Activated T-helper 1 cell treated with anti-CD3 and anti-CD28 coated beads, Interleukin-12 subunit alpha, Interleukin-12 subunit beta, Interleukin-2, Interleukin-4 antibody, amounts not matched to agents 30 ng/mL and 10 ng/mL and 1 ng/mL, durations not matched to agents 14 hours and 24 hours and 36 hours (primary cell): ENCODE measurements at regions of chr9 and their contacts with region 1.

Region 1: GRCh38 chr9:14768405-14769229 is 46.1 kb upstream of the CER1 start:
- DNase-seq: no peak
- H3K4me3 Mint-ChIP-seq: no peak overlapping the region
- H3K27ac Mint-ChIP-seq: no peak overlapping the region
- H3K4me1 Mint-ChIP-seq: no peaks in the 10 kb centered on the region
- H3K27me3 Mint-ChIP-seq: peaks cover 10% of the 10 kb centered on the region

Region 2: GRCh38 chr9:13427587-13427986 is 1341.0 kb before region 1 on chr9:
- intact Hi-C with region 1: loop called (anchors 5 kb)
- DNase-seq: no peak
- H3K4me3 Mint-ChIP-seq: no peak overlapping the region
- H3K27ac Mint-ChIP-seq: no peak overlapping the region
- H3K4me1 Mint-ChIP-seq: no peaks in the 10 kb centered on the region
- H3K27me3 Mint-ChIP-seq: no peaks in the 10 kb centered on the region

Region 3: GRCh38 chr9:14353222-14354056 is 415.2 kb before region 1 on chr9:
- intact Hi-C with region 1: loop called (anchors 2 kb)
- DNase-seq: peak; percentile 57
- H3K4me3 Mint-ChIP-seq: no peak overlapping the region
- H3K27ac Mint-ChIP-seq: no peak overlapping the region
- H3K4me1 Mint-ChIP-seq: peaks cover 7% of the 10 kb centered on the region
- H3K27me3 Mint-ChIP-seq: peaks cover 31% of the 10 kb centered on the region

Region 4: DNA sequence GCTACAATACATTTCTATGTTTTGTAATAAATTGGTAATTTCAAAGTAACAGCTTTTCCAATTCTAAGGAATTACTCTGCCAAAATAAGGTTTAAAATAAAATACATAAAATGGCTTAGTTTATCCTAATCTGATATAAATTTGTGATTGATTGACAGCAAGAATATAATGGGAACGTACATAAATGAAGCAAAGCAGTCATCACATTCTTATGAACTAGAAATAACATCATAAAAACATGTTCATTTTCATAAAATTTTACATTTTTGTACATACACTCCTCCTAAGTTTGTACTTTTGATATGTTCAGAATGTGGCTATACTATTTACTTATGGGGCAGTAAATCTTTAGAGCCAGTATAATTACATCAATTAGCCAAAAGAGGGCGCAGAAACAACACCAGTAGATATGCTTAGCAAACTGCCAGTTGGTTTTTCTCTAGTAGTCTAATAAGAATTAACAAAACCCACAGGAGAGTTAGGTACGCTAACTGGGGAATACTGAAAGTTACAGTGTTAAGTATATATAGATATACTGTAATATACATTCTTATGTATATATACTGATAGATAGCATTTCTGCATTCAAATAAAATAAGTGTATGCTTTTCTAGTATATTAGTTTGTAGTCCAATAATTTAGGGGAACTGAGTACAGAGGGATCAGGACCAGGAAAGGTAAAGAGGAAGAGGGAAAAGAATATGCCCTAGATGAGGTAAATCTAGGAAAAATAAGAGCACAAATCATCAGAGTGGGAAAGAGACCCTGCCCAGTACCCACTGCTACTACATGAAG is 152.2 kb before region 1 on chr9:
- intact Hi-C with region 1: loop called (anchors 1 kb)
- DNase-seq: no peak
- H3K4me3 Mint-ChIP-seq: no peak overlapping the region
- H3K27ac Mint-ChIP-seq: no peak overlapping the region
- H3K4me1 Mint-ChIP-seq: no peaks in the 10 kb centered on the region
- H3K27me3 Mint-ChIP-seq: no peaks in the 10 kb centered on the region

Region 5: DNA sequence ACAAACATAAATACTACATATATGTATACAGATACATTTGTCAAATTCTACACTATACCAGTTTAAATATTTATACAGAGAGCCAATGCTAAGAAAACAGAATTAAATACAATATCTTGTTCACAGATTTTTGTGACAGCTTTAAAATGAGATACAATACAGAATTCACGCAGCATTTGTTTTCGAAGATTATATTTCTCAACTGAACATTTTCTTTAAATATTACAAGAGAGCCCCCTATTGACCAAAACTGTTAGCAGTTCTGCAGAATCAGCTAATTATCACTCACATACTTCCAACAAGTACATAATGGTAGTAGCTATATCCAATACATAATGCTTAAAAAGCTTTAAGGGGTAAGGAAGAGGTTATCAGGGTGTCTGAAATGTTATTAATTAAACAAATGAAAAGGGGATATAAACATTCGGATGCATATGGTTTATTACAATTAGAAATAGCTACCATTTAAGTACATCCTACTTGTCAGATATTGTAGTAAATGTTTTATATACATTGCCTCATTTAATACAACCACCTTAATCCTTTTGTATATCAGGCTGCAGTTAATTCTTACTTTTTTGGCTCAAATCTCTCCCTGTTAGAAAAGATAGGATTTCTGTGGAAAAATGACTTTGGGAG is 107.1 kb before region 1 on chr9:
- intact Hi-C with region 1: loop called (anchors 5 kb)
- DNase-seq: no peak
- H3K4me3 Mint-ChIP-seq: no peak overlapping the region
- H3K27ac Mint-ChIP-seq: no peak overlapping the region
- H3K4me1 Mint-ChIP-seq: no peaks in the 10 kb centered on the region
- H3K27me3 Mint-ChIP-seq: no peaks in the 10 kb centered on the region

Region 6: GRCh38 chr9:15135164-15135792 is 366.7 kb after region 1 on chr9:
- intact Hi-C with region 1: loop called (anchors 5 kb)
- DNase-seq: peak; percentile 43
- H3K4me3 Mint-ChIP-seq: no peak overlapping the region
- H3K27ac Mint-ChIP-seq: no peak overlapping the region
- H3K4me1 Mint-ChIP-seq: peaks cover 6% of the 10 kb centered on the region
- H3K27me3 Mint-ChIP-seq: peaks cover 5% of the 10 kb centered on the region